CD4-positive, alpha-beta memory T cell (primary cell): ENCODE measurements at regions of chr12 and their contacts with region 1.

Region 1: DNA sequence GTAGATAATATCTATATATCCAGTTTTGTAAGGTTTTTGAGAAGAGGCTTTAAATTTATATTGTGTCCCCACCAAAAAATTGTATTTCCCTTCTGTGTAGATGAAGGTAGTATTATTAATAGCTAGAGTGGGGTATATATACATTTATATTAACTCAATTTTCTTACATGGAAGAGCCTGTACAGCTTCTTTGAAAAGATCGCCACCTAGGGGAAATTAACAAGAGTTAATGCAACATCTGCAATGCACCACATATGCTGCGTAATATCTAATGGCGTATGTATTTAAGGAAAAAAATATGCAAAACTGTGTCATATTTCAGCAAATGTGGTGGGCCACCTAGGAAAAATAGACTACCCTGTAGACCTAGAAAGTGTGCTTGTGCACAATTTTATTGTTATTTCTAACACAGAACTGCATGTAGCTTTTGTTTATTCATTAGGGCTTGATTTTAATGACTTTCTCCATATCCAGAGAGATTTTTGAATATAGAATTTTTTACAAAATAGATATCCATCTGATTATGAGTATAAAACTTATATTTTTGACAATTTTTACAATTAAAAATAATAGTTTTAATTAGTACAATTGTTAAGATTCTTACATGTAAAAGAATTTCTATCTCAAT is 14.0 kb downstream of the CCER1 start:
- DNase-seq: peak in 2 of 5 donors; percentile 9
- H3K4me3 ChIP-seq: no peak overlapping the region
- H3K4me3 Mint-ChIP-seq: no peak overlapping the region
- H3K27ac ChIP-seq: no peak overlapping the region
- H3K27ac Mint-ChIP-seq: no peak overlapping the region
- H3K4me1 ChIP-seq: no peaks in the 10 kb centered on the region
- H3K4me1 Mint-ChIP-seq: no peaks in the 10 kb centered on the region
- H3K27me3 ChIP-seq: no peaks in the 10 kb centered on the region
- H3K27me3 Mint-ChIP-seq: peaks cover 4 to 5% of the 10 kb centered on the region in 2 donors

Region 2: GRCh38 chr12:90970473-90970872 is 29.5 kb after region 1 on chr12:
- CTCF ChIA-PET with region 1: no interaction called
- POLR2A ChIA-PET with region 1: no interaction called
- intact Hi-C with region 1: no loop called
- DNase-seq: no peak
- H3K4me3 ChIP-seq: no peak overlapping the region
- H3K4me3 Mint-ChIP-seq: no peak overlapping the region
- H3K27ac ChIP-seq: no peak overlapping the region
- H3K27ac Mint-ChIP-seq: no peak overlapping the region
- H3K4me1 ChIP-seq: no peaks in the 10 kb centered on the region
- H3K4me1 Mint-ChIP-seq: no peaks in the 10 kb centered on the region
- H3K27me3 ChIP-seq: no peaks in the 10 kb centered on the region
- H3K27me3 Mint-ChIP-seq: peaks cover 2 to 3% of the 10 kb centered on the region in 2 donors

Region 3: GRCh38 chr12:91355150-91356006 is 414.4 kb after region 1 on chr12:
- CTCF ChIA-PET with region 1: no interaction called
- POLR2A ChIA-PET with region 1: no interaction called
- intact Hi-C with region 1: loop called (anchors 1 kb)
- DNase-seq: peak; percentile 13 to 40 (median 28)
- H3K4me3 ChIP-seq: no peak overlapping the region
- H3K4me3 Mint-ChIP-seq: no peak overlapping the region
- H3K27ac ChIP-seq: no peak overlapping the region
- H3K27ac Mint-ChIP-seq: no peak overlapping the region
- H3K4me1 ChIP-seq: no peaks in the 10 kb centered on the region
- H3K4me1 Mint-ChIP-seq: peaks cover 0 to 5% (median 0%) of the 10 kb centered on the region in 4 donors
- H3K27me3 ChIP-seq: peaks cover 4% of the 10 kb centered on the region
- H3K27me3 Mint-ChIP-seq: peaks cover 4 to 16% of the 10 kb centered on the region in 2 donors